Mammary epithelial cell (primary cell): ENCODE measurements at regions of chr20 and their contacts with region 1.

Region 1: DNA sequence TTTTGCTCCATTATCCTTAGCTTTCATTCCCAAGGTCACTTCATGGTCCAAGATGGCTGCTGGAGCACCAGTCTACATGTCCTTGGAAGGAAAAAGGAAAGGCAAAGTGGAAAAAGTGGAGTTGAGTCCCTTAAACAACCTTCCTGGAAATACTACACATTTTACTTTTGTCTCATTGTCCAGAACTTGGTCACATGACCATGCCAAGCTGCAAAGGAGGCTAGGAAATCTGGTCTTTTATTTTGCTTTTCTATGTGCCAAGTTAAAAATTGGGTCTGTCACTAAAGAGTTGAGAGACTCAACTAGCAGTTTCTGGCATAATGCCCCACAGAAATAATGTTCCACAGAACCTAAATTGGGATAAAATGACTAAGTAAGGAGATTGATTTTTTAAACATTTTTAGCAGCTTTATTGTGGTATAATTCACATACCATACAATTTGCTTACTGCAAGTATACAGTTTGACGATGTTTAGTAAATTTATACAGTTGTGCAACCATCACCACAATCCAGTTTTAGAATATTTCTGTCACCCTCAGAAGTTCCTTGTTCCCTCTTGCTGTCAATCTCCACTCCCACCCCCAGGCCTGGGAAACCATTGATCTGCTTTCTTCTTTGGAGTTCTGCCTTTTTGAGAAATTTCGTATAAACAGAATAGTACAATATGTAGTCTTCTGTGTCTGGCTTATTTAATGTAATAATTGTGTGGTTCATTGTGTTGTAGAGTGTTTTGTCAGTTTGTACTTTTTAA is 5.6 kb upstream of the CHD6 start:
- DNase-seq: no peak
- H3K4me3 ChIP-seq: no peak overlapping the region
- H3K27ac ChIP-seq: no peak overlapping the region
- H3K4me1 ChIP-seq: peaks cover 4% of the 10 kb centered on the region
- H3K27me3 ChIP-seq: no peaks in the 10 kb centered on the region
- CTCF ChIP-seq: no peak

Region 2: GRCh38 chr20:41664350-41664983 is 40.7 kb after region 1 on chr20:
- CTCF ChIA-PET with region 1: no interaction called
- dilution Hi-C with region 1: no loop called
- in situ Hi-C with region 1: no loop called
- intact Hi-C with region 1: loop called (anchors 2 kb)
- DNase-seq: no peak
- H3K4me3 ChIP-seq: no peak overlapping the region
- H3K27ac ChIP-seq: no peak overlapping the region
- H3K4me1 ChIP-seq: no peaks in the 10 kb centered on the region
- H3K27me3 ChIP-seq: no peaks in the 10 kb centered on the region
- CTCF ChIP-seq: no peak

Region 3: GRCh38 chr20:42432496-42433334 is 808.9 kb after region 1 on chr20:
- CTCF ChIA-PET with region 1: no interaction called
- dilution Hi-C with region 1: no loop called
- in situ Hi-C with region 1: no loop called
- intact Hi-C with region 1: no loop called
- DNase-seq: no peak
- H3K4me3 ChIP-seq: no peak overlapping the region
- H3K27ac ChIP-seq: no peak overlapping the region
- H3K4me1 ChIP-seq: no peaks in the 10 kb centered on the region
- H3K27me3 ChIP-seq: no peaks in the 10 kb centered on the region
- CTCF ChIP-seq: no peak